IMR-90 (cell line): ENCODE measurements at regions of chr6 and their contacts with region 1.

Region 1: GRCh38 chr6:136643850-136644596 is 93.8 kb upstream of the MAP7 start:
- DNase-seq: peak; percentile 83
- ATAC-seq: peak; percentile 69
- H3K4me3 ChIP-seq: no peak overlapping the region
- H3K27ac ChIP-seq: no peak overlapping the region
- H3K4me1 ChIP-seq: peaks cover 13% of the 10 kb centered on the region
- H3K27me3 ChIP-seq: no peaks in the 10 kb centered on the region
- CTCF ChIP-seq: peak; percentile 83
- POLR2A ChIP-seq: no peak
- RAD21 ChIP-seq: peak; percentile 86

Region 2: DNA sequence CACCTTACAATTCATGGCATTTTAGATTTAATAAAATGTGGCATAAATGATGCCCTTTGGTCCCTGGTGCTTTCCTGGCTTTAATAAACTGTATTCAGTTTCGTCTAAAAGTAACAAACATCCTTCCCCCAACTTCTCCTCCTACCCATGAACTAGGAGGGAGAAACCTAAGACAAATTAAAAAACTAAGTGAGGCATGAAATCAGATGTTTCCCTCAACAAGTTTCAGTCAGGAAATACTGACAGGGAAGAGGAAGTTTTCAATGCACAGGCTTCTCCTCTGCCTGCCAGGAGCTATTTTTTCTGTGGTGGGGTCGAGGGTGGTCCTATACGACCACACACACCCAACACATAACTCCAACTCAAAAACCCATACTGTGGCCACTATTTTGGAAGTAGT is 1599.4 kb before region 1 on chr6:
- CTCF ChIA-PET with region 1: interaction called, 10 read pairs
- POLR2A ChIA-PET with region 1: no interaction called
- dilution Hi-C with region 1: no loop called
- in situ Hi-C with region 1: no loop called
- intact Hi-C with region 1: no loop called
- DNase-seq: no peak
- ATAC-seq: no peak
- H3K4me3 ChIP-seq: no peak overlapping the region
- H3K27ac ChIP-seq: no peak overlapping the region
- H3K4me1 ChIP-seq: no peaks in the 10 kb centered on the region
- H3K27me3 ChIP-seq: no peaks in the 10 kb centered on the region
- CTCF ChIP-seq: no peak
- POLR2A ChIP-seq: no peak
- RAD21 ChIP-seq: no peak

Region 3: GRCh38 chr6:136582711-136583471 is 61.1 kb before region 1 on chr6:
- CTCF ChIA-PET with region 1: interaction called, 3 read pairs
- POLR2A ChIA-PET with region 1: no interaction called
- dilution Hi-C with region 1: no loop called
- in situ Hi-C with region 1: no loop called
- intact Hi-C with region 1: loop called (anchors 2 kb)
- DNase-seq: peak; percentile 94
- ATAC-seq: peak; percentile 47
- H3K4me3 ChIP-seq: no peak overlapping the region
- H3K27ac ChIP-seq: 0 out of 2 replicates have a peak overlapping the region, but pooled peaks have one; percentile 29
- H3K4me1 ChIP-seq: peaks cover 11% of the 10 kb centered on the region
- H3K27me3 ChIP-seq: no peaks in the 10 kb centered on the region
- CTCF ChIP-seq: peak; percentile 73
- POLR2A ChIP-seq: no peak
- RAD21 ChIP-seq: peak; percentile 72

Region 4: DNA sequence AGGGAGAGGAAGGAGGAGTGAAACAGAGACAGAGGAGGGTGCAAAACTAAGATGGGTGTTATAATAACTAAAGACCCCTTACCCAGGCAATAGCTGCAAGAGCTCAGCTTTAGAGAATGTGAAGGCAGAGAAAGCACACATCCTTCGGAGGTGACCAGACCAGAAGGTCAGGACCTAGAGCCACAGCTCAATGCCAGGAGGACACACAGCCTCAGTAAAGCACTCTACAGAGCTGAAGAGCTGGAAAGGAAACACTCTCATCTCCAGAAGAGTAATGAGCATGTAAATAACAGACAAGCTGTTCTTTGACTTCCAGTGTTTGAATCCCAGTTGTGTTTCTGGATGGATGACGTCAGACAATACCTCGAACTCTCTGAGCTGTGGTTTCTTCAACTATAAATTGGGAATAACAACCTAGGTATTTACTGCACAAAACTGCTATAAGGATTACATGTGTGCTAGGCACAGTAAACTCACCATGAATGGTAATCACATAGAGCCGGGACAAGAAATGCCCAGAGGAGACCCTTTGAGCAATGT is 85.0 kb after region 1 on chr6:
- CTCF ChIA-PET with region 1: no interaction called
- POLR2A ChIA-PET with region 1: no interaction called
- dilution Hi-C with region 1: no loop called
- in situ Hi-C with region 1: no loop called
- intact Hi-C with region 1: no loop called
- DNase-seq: no peak
- ATAC-seq: no peak
- H3K4me3 ChIP-seq: no peak overlapping the region
- H3K27ac ChIP-seq: no peak overlapping the region
- H3K4me1 ChIP-seq: peaks cover 5% of the 10 kb centered on the region
- H3K27me3 ChIP-seq: no peaks in the 10 kb centered on the region
- CTCF ChIP-seq: no peak
- POLR2A ChIP-seq: no peak
- RAD21 ChIP-seq: no peak